ENCODE measurements at regions of chr12 and their contacts with region 1.

Region 1: GRCh38 chr12:120928864-120929652 is 24.9 kb upstream of the SPPL3 start:
- DNase-seq: peak; percentile 81
- H3K4me3 ChIP-seq: peak overlapping the region in 2 of 3 experiments; percentile 13 to 35
- H3K27ac ChIP-seq: peak overlapping the region; percentile 78
- H3K4me1 ChIP-seq: peaks cover 25% of the 10 kb centered on the region
- H3K27me3 ChIP-seq: no peaks in the 10 kb centered on the region
- CTCF ChIP-seq: no peak

Region 2: DNA sequence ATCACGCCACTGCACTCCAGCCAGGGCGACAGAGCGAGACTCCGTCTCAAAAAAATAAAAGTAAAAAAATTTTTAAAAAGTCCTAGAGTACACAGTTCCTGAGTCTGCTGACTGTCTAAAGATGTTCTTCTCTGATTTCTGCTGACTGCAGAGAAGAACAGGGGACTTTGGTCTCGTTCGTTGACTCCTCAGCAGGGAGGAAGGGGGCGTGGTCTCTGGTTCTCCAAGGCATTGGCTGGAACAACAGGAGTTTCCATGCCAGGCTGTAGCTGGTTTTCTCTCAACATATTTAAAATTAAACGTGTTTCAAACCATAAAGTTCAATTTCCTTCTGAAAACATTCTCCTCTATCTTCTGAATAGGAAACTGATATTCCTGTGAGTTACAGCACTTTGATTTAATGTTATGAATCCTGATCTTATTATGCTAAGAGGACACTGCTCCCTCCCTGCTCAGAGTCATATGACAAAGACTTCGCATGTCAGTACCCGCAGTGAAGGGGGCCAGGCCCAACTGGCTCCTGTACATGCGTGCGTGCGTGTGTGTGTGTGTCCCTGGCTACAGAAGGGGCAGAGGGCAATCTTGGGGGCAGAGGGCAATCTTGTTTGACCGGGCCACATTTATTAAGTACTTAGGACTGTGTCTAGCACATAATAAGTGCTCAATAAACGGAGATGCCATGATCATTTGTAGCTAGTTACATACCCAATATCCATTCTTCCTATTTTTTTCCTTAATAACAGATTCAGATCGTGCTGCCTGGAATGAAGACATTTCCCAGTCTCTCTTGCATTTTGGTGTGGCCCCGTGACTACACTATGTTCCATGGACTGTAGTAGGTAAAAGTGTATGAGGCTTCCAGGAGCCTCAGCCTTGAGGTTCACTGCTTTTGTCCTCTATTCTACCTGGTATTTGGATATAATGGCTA is 32.8 kb after region 1 on chr12:
- CTCF ChIA-PET with region 1: no interaction called
- dilution Hi-C with region 1: no loop called
- in situ Hi-C with region 1: no loop called
- intact Hi-C with region 1: loop called (anchors 5 kb)
- DNase-seq: no peak
- H3K4me3 ChIP-seq: no peak overlapping the region
- H3K27ac ChIP-seq: peak overlapping the region; percentile 4
- H3K4me1 ChIP-seq: peaks cover 10% of the 10 kb centered on the region
- H3K27me3 ChIP-seq: no peaks in the 10 kb centered on the region
- CTCF ChIP-seq: no peak

Measured in mammary epithelial cell (primary cell).